Activated CD4-positive, alpha-beta memory T cell treated with anti-CD3 and anti-CD28 coated beads for 36 hours (primary cell): ENCODE measurements at regions of chr1 and their contacts with region 1.

Region 1: GRCh38 chr1:182595641-182596240 is 6.7 kb upstream of the RNASEL start:
- DNase-seq: peak; percentile 80
- H3K4me3 Mint-ChIP-seq: no peak overlapping the region
- H3K27ac Mint-ChIP-seq: no peak overlapping the region
- H3K4me1 Mint-ChIP-seq: peaks cover 10% of the 10 kb centered on the region
- H3K27me3 Mint-ChIP-seq: no peaks in the 10 kb centered on the region

Region 2: DNA sequence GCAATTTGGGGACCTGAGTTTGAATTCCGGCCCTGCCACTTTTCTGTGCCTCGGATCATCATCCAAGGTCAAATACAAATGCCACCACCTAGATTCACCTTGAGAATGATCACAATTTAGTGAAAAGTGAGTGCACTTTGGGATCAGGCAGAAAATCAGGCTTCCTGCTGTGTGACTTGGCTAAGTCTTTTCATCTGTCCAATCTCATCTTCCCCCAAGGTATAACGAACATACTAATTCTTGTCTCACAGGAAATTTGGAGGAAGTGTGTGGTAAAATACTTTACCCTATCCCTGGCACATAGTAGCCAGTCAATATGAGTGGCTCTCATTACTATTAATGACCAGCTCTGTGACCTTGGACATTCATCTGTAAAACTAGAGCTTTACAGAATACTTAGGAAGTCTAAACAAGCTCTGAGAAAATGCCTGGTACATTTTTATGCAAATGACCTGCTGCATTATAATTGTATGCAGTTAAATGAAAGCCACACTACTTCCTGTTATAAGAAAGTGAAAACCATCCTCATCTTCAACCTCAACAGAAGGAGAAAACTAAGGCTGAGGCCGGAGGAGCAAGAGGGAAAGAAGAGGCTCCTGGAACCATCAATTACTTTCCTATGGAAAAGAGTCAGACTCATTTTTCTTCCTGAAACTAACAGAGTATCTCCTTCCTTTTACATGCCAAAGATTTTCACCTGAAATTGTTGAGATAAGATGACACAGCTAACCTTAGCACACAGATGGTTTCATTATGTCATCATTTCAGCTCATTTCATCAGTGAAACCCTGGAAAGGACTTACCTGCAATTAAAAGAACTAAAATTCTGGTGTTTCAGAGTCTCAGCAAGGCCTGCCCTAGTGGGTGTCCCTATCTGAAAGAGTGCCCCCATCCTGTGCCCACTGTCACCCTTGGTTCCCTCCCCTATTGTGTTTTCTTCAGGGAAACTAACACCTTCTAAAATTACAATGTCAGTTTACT is 121.3 kb after region 1 on chr1:
- CTCF ChIA-PET with region 1: interaction called, 10 read pairs
- POLR2A ChIA-PET with region 1: no interaction called
- intact Hi-C with region 1: no loop called
- DNase-seq: no peak
- H3K4me3 Mint-ChIP-seq: no peak overlapping the region
- H3K27ac Mint-ChIP-seq: peak overlapping the region; percentile 19
- H3K4me1 Mint-ChIP-seq: peaks cover 39% of the 10 kb centered on the region
- H3K27me3 Mint-ChIP-seq: no peaks in the 10 kb centered on the region

Region 3: DNA sequence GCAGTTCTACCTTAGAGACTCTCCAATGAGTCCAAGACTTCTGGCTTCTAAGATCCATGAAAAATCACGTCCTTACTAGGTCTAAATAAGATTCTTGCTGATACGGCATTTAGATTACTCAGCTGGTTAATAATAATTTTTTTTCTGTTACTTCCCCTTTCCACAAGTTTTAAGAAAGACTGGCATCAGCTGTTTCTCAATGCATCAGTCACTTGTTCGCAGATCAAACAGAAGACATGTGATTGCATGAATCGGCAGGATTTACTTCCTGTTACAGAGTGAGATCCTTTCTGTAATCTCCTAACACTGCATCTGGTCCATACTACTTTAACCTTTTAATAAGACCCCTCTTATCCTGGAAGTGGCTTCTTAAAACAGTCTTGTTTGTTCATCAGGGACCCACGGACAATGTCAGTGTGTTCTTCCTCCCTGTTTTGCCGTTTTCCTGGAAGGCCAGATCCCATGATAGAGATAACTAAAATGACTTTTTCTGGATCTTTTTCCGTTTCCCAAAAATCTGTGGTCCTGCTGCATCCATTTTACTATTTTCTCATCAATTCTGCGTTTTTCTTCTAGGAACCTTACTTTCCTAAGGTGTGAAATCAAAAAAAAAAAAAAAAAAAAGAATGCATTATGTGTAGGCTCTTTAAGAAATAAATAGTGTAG is 200.0 kb after region 1 on chr1:
- CTCF ChIA-PET with region 1: interaction called, 1,086 read pairs
- POLR2A ChIA-PET with region 1: no interaction called
- intact Hi-C with region 1: no loop called
- DNase-seq: no peak
- H3K4me3 Mint-ChIP-seq: no peak overlapping the region
- H3K27ac Mint-ChIP-seq: no peak overlapping the region
- H3K4me1 Mint-ChIP-seq: no peaks in the 10 kb centered on the region
- H3K27me3 Mint-ChIP-seq: no peaks in the 10 kb centered on the region